H1 (cell line): ENCODE measurements at regions of chr10 and their contacts with region 1.

Region 1: DNA sequence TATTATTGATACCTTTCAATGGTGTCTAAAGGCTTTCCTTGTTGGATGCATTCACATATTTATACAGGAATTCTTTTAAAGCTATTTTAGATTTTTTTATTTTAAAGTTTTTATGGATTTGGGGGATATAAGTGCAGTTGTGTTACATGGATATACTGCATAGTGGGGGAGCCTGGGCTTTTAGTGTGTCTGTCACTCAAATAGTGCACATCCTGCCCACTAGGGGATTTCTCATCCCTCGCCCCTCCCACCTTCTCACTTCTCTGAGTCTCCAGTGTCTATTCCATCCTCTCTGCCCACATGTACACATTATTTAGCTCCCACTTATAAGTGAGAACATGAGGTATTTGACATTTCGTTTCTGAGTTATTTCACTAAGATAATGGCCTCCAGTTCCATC is 154.0 kb upstream of the MKI67 start:
- DNase-seq: no peak
- H3K4me3 ChIP-seq: no peak overlapping the region
- H3K27ac ChIP-seq: no peak overlapping the region
- H3K4me1 ChIP-seq: peaks cover 0 to 3% (median 0%) of the 10 kb centered on the region in 4 experiments; a peak in 1 of 7 replicates
- H3K27me3 ChIP-seq: peaks cover 0 to 6% (median 2%) of the 10 kb centered on the region in 4 experiments; a peak in 4 of 7 replicates
- CTCF ChIP-seq: no peak
- EP300 ChIP-seq: no peak
- POLR2A ChIP-seq: no peak
- RAD21 ChIP-seq: no peak

Region 2: GRCh38 chr10:128295003-128295402 is 14.7 kb after region 1 on chr10:
- CTCF ChIA-PET with region 1: interaction called, 17 read pairs
- POLR2A ChIA-PET with region 1: no interaction called
- DNase-seq: no peak
- H3K4me3 ChIP-seq: no peak overlapping the region
- H3K27ac ChIP-seq: no peak overlapping the region
- H3K4me1 ChIP-seq: no peaks in the 10 kb centered on the region
- H3K27me3 ChIP-seq: peaks cover 0 to under 1% (median 0%) of the 10 kb centered on the region in 4 experiments; a peak in 1 of 7 replicates
- CTCF ChIP-seq: peak; percentile 29 to 63 (median 62); a peak in 3 of 4 replicates
- EP300 ChIP-seq: no peak
- POLR2A ChIP-seq: no peak
- RAD21 ChIP-seq: peak; percentile 32 to 49; a peak in 3 of 4 replicates

Region 3: GRCh38 chr10:128307819-128308218 is 27.5 kb after region 1 on chr10:
- CTCF ChIA-PET with region 1: no interaction called
- POLR2A ChIA-PET with region 1: no interaction called
- DNase-seq: no peak
- H3K4me3 ChIP-seq: no peak overlapping the region
- H3K27ac ChIP-seq: no peak overlapping the region
- H3K4me1 ChIP-seq: peaks cover 0 to 10% (median 8%) of the 10 kb centered on the region in 4 experiments
- H3K27me3 ChIP-seq: no peaks in the 10 kb centered on the region
- CTCF ChIP-seq: no peak
- EP300 ChIP-seq: no peak
- POLR2A ChIP-seq: no peak
- RAD21 ChIP-seq: no peak

Region 4: DNA sequence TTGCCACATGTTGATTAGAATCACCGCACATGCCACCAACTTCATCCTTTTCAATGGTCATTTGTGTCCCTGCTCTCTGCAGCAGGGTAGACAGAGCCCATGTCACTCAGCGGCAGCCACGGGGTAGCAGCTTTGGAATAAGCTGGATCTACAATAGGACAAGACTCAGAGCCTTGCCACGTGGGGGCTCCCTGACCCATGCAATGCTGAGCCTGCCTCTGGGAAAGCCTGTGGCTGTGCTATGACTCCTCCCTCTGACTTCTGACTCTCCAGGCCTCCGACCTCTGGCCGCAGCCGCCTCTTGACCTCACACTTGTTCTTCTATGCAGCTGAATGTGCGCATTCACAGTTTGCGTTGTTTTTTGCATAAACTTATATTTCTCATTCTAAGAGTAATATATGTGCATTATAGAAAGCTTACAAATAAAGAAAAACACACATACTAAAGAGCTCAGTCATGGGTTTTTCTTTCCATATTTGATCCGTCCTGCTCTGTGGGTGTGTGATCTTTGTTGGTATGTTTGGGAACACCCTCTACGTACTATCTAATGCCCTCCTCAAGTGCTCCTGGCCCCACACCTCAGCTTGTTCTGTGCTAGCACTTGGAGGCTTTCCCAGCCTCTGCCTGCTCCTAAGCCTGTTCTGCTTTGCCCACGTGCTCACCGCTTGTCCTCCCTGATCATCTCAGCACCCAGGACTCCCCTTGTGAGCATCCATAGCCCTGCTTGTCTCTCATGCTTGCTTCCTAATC is 44.0 kb after region 1 on chr10:
- CTCF ChIA-PET with region 1: no interaction called
- POLR2A ChIA-PET with region 1: no interaction called
- DNase-seq: peak; percentile 17 to 63
- H3K4me3 ChIP-seq: no peak overlapping the region
- H3K27ac ChIP-seq: no peak overlapping the region
- H3K4me1 ChIP-seq: no peaks in the 10 kb centered on the region
- H3K27me3 ChIP-seq: no peaks in the 10 kb centered on the region
- CTCF ChIP-seq: peak; percentile 52 to 55 (median 52)
- EP300 ChIP-seq: no peak
- POLR2A ChIP-seq: no peak
- RAD21 ChIP-seq: peak; percentile 85 to 88